AG04449 (cell line): ENCODE measurements at regions of chr9 and their contacts with region 1.

Region 1: GRCh38 chr9:131349881-131350563 is 43.9 kb upstream of the PRRC2B start:
- DNase-seq: peak; percentile 23
- H3K4me3 ChIP-seq: peak overlapping the region; percentile 53
- CTCF ChIP-seq: peak; percentile 98

Region 2: DNA sequence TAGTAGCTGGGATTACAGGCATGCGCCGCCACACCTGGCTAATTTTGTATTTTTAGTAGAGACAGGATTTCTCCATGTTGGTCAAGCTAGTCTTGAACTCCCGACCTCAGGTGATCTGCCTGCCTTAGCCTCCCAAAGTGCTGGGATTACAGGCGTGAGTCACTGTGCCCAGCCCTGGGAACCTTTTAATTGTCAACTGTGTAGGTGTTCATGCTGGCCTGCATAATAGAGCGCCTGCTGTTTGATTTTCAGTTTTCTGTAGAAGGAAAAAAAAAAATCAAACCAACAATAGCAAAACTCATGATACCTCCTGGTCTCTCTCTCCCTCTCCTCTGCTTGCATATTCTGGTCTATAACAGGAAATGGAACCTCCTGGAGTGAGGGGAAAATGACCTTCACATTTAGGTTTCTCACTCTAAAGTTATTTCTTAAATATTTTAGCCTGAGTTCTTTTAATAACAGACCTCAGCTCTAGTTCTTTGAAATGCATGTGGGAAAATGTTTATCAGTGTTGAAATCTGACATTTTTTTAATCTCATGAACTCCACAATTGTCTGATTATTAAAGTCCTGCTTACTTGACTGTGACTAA is 604.7 kb before region 1 on chr9:
- CTCF ChIA-PET with region 1: no interaction called
- POLR2A ChIA-PET with region 1: no interaction called
- DNase-seq: no peak
- H3K4me3 ChIP-seq: no peak overlapping the region
- CTCF ChIP-seq: no peak

Region 3: DNA sequence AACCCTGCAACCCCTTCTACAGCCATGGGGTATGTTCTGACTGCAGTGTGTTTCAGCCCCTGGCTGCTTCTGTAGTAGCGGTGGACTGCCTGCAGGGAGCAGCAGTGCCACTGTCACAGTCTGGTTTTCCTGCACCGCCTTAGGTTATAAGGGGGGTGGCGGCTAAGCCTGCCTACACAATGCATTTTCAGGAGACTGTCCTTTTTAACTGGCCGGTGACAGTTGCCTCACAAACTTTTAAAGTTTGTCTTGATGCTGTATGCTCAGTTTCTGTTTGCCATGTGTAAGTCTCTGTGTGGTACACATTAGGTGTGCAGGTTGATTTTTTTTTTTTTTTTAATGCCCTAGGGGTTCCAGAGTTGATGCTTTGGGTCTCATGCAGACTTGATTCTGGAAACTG is 171.6 kb before region 1 on chr9:
- CTCF ChIA-PET with region 1: interaction called, 21 read pairs
- POLR2A ChIA-PET with region 1: no interaction called
- DNase-seq: no peak
- H3K4me3 ChIP-seq: no peak overlapping the region
- CTCF ChIP-seq: peak; percentile 91

Region 4: GRCh38 chr9:131361202-131361833 is 11.3 kb after region 1 on chr9:
- CTCF ChIA-PET with region 1: interaction called, 16 read pairs
- POLR2A ChIA-PET with region 1: no interaction called
- DNase-seq: no peak
- H3K4me3 ChIP-seq: no peak overlapping the region
- CTCF ChIP-seq: no peak

Region 5: GRCh38 chr9:131432597-131433306 is 82.7 kb after region 1 on chr9:
- CTCF ChIA-PET with region 1: interaction called, 22 read pairs
- POLR2A ChIA-PET with region 1: no interaction called
- DNase-seq: peak; percentile 89
- H3K4me3 ChIP-seq: no peak overlapping the region
- CTCF ChIP-seq: no peak

Region 6: DNA sequence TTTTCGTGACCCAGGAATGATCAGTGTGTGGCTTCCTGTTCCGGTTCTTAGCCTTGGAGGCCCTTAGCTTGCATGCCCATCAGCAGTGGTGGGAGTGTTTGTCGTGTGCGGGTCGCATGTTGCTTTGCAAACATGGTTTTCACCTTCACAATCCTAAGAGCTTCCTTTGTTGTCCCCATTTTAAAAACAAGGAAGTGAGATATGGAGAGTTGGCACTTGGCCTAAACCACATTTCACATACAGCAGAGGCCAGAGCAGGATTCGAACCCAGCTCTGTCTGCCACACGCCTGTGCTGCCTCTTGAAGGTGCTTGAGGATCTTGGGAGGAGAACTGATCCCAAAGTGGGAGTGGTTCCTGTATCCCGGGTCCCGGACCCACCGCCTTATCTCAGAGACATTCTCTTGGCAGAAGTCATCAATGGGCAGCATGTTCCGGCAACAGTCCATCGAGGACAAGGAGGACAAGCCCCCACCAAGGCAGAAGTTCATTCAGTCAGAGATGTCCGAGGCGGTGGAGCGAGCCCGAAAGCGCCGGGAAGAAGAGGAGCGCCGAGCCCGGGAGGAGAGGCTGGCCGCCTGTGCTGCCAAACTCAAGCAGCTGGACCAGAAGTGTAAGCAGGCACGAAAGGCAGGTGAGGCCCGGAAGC is 114.5 kb after region 1 on chr9:
- CTCF ChIA-PET with region 1: interaction called, 14 read pairs
- POLR2A ChIA-PET with region 1: no interaction called
- DNase-seq: no peak
- H3K4me3 ChIP-seq: no peak overlapping the region
- CTCF ChIP-seq: no peak

Region 7: DNA sequence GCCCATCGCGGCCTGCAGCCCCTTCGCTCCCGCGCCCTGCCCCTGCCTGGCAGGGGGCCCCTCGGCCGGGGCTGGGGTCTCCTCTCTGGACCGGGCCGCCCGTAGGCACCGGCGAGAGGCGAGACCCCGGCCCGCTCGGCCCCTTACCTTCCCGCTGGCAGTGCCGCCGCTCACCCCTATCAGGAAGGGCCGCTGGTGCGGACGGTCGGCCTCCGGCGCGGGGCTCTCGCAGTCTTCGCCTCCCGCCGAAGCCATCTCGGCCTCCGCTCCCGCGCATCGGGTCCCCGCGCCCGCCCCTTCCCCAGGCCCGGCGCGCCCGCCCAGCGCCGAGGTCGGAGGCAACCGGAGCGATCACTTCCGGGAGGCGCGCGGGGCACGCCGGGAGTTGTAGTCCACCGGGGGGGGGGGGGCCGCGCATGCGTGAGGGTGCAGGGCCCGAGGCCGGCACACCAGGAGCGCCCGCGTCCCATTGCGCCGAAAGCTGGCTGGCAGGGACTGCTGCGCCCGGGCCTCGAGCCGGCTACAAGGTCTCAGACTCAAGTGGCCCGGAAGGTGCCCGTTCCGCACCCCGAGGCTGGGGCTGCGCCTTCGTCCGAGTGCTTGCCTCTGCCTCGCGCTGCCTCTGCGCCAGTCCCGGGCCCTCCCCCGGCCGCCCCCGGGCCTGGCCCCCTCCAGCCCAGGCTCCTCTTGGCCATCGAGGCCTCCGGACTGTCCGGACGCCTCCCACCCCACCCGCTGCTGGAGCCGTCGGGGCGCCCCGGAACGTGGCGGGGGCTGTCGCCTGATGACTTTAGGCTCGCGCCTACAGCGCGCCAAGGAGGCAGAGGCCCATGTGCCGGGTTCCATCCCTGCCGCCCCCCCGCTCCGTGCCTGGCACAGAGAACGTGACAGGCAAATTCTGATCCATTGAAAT is 181.2 kb after region 1 on chr9 and contains the start of gene UCK1:
- CTCF ChIA-PET with region 1: no interaction called
- POLR2A ChIA-PET with region 1: no interaction called
- DNase-seq: no peak
- H3K4me3 ChIP-seq: peak within 1 kb of the TSS; percentile 74
- CTCF ChIP-seq: no peak

Region 8: GRCh38 chr9:131739980-131740648 is 390.1 kb after region 1 on chr9 and contains the start of gene RAPGEF1:
- CTCF ChIA-PET with region 1: interaction called, 18 read pairs
- POLR2A ChIA-PET with region 1: no interaction called
- DNase-seq: no peak
- H3K4me3 ChIP-seq: peak within 1 kb of the TSS; percentile 63
- CTCF ChIP-seq: peak; percentile 74